HCT116 (cell line): ENCODE measurements at regions of chrX and their contacts with region 1.

Region 1: GRCh38 chrX:71550578-71550977 is 17.7 kb downstream of the OGT start:
- DNase-seq: no peak
- ATAC-seq: no peak
- H3K4me3 ChIP-seq: no peak overlapping the region
- H3K27ac ChIP-seq: no peak overlapping the region
- H3K4me1 ChIP-seq: no peaks in the 10 kb centered on the region
- H3K27me3 ChIP-seq: no peaks in the 10 kb centered on the region
- CTCF ChIP-seq: no peak
- POLR2A ChIP-seq: no peak
- RAD21 ChIP-seq: no peak

Region 2: DNA sequence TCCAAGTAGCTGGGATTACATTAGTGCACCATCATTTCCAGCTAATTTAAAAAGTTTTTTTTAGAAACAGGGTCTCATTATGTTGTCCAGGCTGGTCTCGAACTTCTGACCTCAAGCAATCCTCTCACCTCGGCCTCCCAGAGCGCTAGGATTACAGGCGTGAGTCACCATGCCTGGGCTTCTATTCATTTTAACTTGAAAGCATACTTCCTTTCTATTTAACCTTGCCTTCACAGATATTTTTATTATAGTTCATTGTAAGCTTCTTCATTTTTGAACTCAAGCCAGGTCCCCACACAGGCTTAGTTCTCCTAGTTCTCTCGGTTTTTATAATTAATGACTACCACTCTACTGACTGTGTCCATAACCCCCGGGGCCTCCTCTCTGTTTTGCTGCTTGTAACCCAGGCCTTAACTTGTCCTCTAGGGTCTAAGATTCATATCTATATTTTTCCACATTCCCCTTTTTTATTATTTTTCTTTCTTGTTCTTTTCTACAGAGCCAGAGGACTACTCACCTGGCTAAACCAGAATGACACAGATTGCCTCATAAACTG is 533.1 kb before region 1 on chrX:
- CTCF ChIA-PET with region 1: no interaction called
- POLR2A ChIA-PET with region 1: no interaction called
- RAD21 ChIA-PET with region 1: no interaction called
- intact Hi-C with region 1: no loop called
- DNase-seq: no peak
- ATAC-seq: peak; percentile 54; the same call in 1 of the 2 replicates
- H3K4me3 ChIP-seq: no peak overlapping the region
- H3K27ac ChIP-seq: peak overlapping the region; percentile 40; the same call in 1 of the 2 replicates
- H3K4me1 ChIP-seq: peaks cover 12 to 14% of the 10 kb centered on the region in 2 experiments
- H3K27me3 ChIP-seq: no peaks in the 10 kb centered on the region
- CTCF ChIP-seq: no peak
- POLR2A ChIP-seq: no peak
- RAD21 ChIP-seq: no peak

Region 3: GRCh38 chrX:71400710-71401109 is 149.9 kb before region 1 on chrX:
- CTCF ChIA-PET with region 1: no interaction called
- POLR2A ChIA-PET with region 1: no interaction called
- RAD21 ChIA-PET with region 1: no interaction called
- intact Hi-C with region 1: loop called (anchors 10 kb)
- DNase-seq: no peak
- ATAC-seq: no peak
- H3K4me3 ChIP-seq: no peak overlapping the region
- H3K27ac ChIP-seq: no peak overlapping the region
- H3K4me1 ChIP-seq: no peaks in the 10 kb centered on the region
- H3K27me3 ChIP-seq: no peaks in the 10 kb centered on the region
- CTCF ChIP-seq: no peak
- POLR2A ChIP-seq: no peak
- RAD21 ChIP-seq: no peak

Region 4: GRCh38 chrX:71420686-71421085 is 129.9 kb before region 1 on chrX:
- CTCF ChIA-PET with region 1: no interaction called
- POLR2A ChIA-PET with region 1: no interaction called
- RAD21 ChIA-PET with region 1: no interaction called
- intact Hi-C with region 1: no loop called
- DNase-seq: no peak
- ATAC-seq: no peak
- H3K4me3 ChIP-seq: no peak overlapping the region
- H3K27ac ChIP-seq: no peak overlapping the region
- H3K4me1 ChIP-seq: no peaks in the 10 kb centered on the region
- H3K27me3 ChIP-seq: no peaks in the 10 kb centered on the region
- CTCF ChIP-seq: no peak
- POLR2A ChIP-seq: no peak
- RAD21 ChIP-seq: no peak

Region 5: DNA sequence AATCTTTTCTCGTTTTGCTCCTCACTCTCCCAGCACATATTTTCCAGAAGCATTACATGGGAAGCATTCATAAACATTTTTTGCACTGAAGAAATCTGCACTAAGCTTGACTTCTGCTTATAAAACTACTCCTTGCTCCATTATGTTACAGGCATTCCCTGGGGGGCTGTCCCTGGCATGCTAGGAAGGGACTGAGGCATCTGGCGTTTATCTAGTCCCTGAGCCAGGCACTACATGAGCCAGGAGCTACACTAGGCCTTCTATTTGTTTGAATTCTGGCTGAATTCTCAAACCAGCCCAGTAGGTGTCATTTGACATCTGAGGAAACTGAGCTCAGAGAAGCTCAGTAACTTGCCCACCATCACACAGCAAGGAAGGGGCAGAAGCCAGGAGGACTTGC is 403.4 kb after region 1 on chrX:
- CTCF ChIA-PET with region 1: no interaction called
- POLR2A ChIA-PET with region 1: no interaction called
- RAD21 ChIA-PET with region 1: no interaction called
- intact Hi-C with region 1: no loop called
- DNase-seq: no peak
- ATAC-seq: no peak
- H3K4me3 ChIP-seq: no peak overlapping the region
- H3K27ac ChIP-seq: no peak overlapping the region
- H3K4me1 ChIP-seq: no peaks in the 10 kb centered on the region
- H3K27me3 ChIP-seq: no peaks in the 10 kb centered on the region
- CTCF ChIP-seq: no peak
- POLR2A ChIP-seq: no peak
- RAD21 ChIP-seq: no peak

Region 6: DNA sequence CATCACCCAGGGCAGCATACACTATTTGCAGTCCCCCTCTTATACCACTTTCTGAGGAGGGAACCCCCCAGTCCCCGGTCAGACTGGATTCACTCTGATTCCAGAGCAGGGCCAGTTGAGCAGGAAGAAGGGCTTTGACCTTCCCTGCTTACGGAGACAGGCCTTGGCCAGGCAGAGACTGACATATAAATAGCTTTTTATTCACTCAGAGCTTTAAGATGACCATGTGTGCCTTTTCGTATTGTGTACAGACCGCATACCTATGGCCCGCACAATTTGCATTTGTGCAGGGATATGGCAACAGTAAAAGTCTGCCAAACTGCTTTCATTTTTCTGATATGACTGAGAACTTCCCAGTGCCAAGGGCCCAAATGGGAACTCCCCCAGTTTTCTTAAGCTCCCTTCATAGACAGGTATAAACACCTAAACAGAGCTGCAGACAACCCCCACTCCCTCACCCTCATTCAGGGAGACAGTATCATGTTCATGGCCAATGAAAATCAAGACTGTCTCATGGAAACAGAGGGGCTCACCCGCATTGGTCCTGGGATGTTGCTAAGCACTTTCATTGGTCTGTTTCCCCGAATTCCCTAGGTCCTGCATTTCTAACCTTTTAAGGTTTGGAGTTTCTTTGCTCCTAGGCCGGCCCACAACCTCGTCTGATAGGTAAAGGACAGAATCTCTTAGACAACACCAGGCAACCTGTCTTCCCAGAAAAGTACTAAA is 495.1 kb after region 1 on chrX:
- CTCF ChIA-PET with region 1: no interaction called
- POLR2A ChIA-PET with region 1: no interaction called
- RAD21 ChIA-PET with region 1: no interaction called
- intact Hi-C with region 1: no loop called
- DNase-seq: no peak
- ATAC-seq: peak; percentile 63
- H3K4me3 ChIP-seq: no peak overlapping the region
- H3K27ac ChIP-seq: no peak overlapping the region
- H3K4me1 ChIP-seq: no peaks in the 10 kb centered on the region
- H3K27me3 ChIP-seq: no peaks in the 10 kb centered on the region
- CTCF ChIP-seq: no peak
- POLR2A ChIP-seq: no peak
- RAD21 ChIP-seq: no peak